GM13976 (cell line): ENCODE measurements at regions of chr4 and their contacts with region 1.

Region 1: GRCh38 chr4:153438916-153439756 is 27.0 kb upstream of the TMEM131L start:
- DNase-seq: peak; percentile 51
- CTCF ChIP-seq: no peak

Region 2: GRCh38 chr4:153573881-153574802 is 135.0 kb after region 1 on chr4:
- in situ Hi-C with region 1: loop called (anchors 5 kb)
- DNase-seq: peak; percentile 51
- CTCF ChIP-seq: peak; percentile 23

Region 3: DNA sequence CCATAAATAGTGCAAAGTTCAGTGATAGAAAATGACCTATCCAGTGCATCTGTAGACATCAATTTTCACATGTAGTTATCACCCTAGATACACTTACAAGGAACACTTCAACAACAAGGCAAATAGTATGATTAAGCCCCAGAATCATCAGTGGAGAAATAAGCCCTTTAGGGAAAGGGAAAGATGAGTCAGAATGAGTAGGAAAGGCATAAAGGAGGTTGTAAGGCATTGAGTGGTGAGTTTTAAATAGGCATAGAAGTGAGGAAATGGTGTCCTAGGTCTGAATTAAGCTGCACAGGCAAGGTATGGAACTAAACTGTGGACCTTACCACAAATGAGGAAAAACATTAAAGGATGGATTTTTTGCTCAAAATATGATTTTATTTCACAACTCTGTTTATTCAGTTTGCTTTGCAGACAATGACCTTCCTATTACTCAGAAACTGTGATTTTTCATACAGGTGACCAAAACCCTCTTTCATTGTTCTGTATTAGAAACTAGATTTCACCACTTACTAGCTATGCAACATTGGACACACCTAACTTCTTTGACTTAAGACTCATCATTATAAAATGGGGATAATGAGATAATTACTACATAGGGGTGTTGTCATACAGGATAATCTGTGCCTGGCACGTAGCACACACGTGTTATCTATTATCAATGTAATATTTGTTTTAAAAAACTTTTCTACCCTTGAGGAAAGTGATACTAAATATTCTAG is 1994.7 kb after region 1 on chr4:
- in situ Hi-C with region 1: no loop called
- DNase-seq: no peak
- CTCF ChIP-seq: no peak